ENCODE measurements at regions of chr11 and their contacts with region 1.

Region 1: GRCh38 chr11:14974515-14975251 is 2.5 kb upstream of the CALCA start:
- H3K4me3 ChIP-seq: peak overlapping the region; percentile 46
- H3K27ac ChIP-seq: no peak overlapping the region; the same call in 1 of the 2 replicates
- H3K4me1 ChIP-seq: no peaks in the 10 kb centered on the region
- CTCF ChIP-seq: peak; percentile 34; the same call in 1 of the 2 replicates

Region 2: DNA sequence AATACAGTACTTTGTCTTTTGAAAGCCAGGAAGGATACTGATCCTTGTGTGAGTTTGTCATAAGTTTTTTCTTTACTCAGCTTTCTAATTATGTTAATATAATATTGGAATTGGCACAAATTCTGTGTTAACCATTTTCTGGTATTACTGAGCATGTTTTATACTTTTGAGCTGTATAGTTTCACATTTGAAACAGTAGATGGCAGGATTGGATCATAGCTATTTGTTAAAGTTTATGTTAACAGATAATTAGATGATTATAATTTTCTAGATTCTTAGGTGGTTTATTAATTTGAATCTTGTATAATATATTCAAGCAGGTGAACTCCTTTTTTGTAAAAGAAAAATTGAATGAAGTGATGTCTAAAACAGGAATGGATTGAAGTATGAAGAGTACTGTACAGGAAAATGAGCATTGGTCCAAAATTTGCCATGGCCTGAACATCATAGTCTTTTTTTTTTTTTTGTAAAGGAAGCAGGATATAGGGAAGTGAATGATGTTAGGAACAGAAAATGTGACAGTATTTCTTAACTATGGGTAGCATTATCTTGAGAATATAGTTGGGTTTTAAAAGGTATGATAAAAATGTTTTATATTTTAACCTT is 184.7 kb before region 1 on chr11:
- CTCF ChIA-PET with region 1: no interaction called
- POLR2A ChIA-PET with region 1: no interaction called
- H3K4me3 ChIP-seq: no peak overlapping the region
- H3K27ac ChIP-seq: no peak overlapping the region
- H3K4me1 ChIP-seq: no peaks in the 10 kb centered on the region
- CTCF ChIP-seq: no peak

Region 3: GRCh38 chr11:14954581-14954980 is 20.1 kb before region 1 on chr11:
- CTCF ChIA-PET with region 1: interaction called, 14 read pairs
- POLR2A ChIA-PET with region 1: no interaction called
- H3K4me3 ChIP-seq: no peak overlapping the region
- H3K27ac ChIP-seq: no peak overlapping the region
- H3K4me1 ChIP-seq: no peaks in the 10 kb centered on the region
- CTCF ChIP-seq: no peak

Region 4: DNA sequence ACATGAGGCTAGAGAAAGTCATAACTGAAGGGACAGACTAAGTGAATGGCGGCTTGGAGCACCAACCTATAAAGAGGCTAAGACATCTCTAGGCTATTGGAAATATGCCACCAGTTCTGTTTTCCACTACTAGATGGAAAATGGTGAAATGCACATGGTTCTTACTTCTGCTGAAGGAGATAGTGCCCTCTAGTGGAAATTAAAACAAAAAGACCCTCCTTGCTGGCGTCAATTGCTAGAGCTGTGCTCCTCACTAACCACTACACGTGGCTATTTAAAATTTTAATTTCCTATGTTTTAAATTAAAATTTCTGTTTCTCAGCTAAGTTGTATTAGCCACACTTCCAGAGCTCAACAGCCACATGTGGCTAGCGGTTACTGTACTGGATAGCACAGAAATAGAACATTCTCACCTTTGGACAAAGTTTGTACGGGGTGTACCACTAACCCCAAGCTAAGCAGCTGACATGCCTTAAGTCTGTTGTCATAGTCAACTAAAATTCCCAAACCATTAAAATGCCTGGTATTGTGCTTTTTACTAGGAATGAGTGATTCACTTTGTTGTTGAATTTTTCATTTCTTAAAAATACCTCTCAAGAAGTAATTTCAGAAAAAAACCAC is 31.6 kb after region 1 on chr11:
- CTCF ChIA-PET with region 1: interaction called, 19 read pairs
- POLR2A ChIA-PET with region 1: no interaction called
- H3K4me3 ChIP-seq: no peak overlapping the region
- H3K27ac ChIP-seq: no peak overlapping the region
- H3K4me1 ChIP-seq: no peaks in the 10 kb centered on the region
- CTCF ChIP-seq: no peak

Measured in HEK293 (cell line).